ENCODE measurements at regions of chr5 and their contacts with region 1.

Region 1: DNA sequence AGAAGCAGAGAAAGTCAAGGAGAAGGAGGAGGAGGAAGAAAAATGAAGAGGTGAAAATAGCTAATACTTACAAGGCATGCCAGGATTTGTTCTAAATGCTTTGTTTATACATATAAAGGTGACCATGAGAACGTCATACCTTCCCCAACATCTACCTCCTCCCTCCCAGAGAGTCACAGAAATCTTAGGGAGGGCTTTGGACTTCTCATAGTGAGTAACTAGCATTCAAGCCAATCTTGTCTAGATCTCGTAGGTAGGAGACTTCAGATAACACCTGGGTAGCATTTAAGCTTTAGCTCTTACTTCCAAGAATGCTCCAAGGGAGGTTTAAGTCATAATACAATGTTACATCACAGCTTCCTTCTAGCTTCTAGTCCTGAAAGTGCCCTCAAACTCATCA is 36.5 kb upstream of the GPBP1 start:
- DNase-seq: no peak
- ATAC-seq: no peak
- H3K4me3 Mint-ChIP-seq: no peak overlapping the region
- H3K27ac Mint-ChIP-seq: no peak overlapping the region
- H3K4me1 Mint-ChIP-seq: no peaks in the 10 kb centered on the region
- H3K27me3 Mint-ChIP-seq: peaks cover 20% of the 10 kb centered on the region

Region 2: DNA sequence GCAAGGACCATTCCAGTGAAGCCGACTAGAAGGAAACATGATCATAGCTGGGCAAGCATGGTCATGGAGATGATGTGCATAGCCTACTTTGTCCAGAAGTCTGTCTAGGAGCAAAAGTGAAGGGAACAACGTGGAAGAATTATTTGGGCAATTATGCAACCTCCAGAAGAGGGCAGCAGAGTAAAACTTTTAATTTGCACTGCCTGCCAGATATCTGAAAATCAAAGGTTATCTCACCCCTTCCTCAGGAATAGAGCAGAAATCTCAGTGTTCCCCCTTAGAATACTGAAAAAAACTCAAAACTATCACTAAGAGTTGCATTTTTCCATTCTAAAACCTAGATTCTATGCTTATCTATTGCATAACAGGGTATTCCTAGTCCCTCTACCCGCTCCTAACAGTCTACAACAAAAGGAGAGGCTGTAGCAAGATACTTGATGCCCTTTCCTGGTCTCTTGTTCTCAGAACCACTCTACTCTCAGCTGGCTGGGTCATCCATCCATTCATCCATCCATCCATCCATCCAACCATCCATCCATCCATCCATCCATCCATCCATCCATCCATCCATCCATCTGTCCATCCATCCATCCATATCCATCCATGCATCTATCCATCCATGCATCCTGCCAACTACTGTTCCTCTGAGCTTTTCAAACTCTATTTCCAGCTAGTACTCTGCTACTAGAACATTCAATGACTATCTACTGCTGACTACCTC is 236.4 kb before region 1 on chr5:
- CTCF ChIA-PET with region 1: interaction called, 54 read pairs
- POLR2A ChIA-PET with region 1: interaction called, 3 read pairs
- DNase-seq: peak; percentile 51
- ATAC-seq: peak; percentile 58
- H3K4me3 Mint-ChIP-seq: no peak overlapping the region
- H3K27ac Mint-ChIP-seq: no peak overlapping the region
- H3K4me1 Mint-ChIP-seq: no peaks in the 10 kb centered on the region
- H3K27me3 Mint-ChIP-seq: peaks cover 17% of the 10 kb centered on the region

Region 3: DNA sequence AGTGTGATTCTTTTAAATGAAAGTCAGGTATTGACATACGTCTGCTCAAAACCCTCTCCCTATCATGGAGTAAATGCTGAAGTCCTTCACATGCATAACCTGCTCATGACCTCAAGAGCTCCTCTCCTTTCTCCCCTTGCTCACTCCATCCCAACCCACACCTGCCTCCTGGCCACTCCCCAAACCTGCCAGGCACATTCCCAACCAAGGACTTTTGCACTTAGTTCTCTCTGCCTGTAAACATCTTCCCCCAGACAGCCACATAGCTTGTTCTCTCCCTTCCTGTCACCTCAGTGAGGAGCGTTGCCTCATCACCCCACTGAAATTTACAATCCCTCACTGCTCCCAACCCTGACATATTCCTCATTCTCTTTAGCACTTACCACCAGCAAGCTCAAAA is 219.3 kb before region 1 on chr5:
- CTCF ChIA-PET with region 1: interaction called, 14 read pairs
- POLR2A ChIA-PET with region 1: no interaction called
- DNase-seq: no peak
- ATAC-seq: no peak
- H3K4me3 Mint-ChIP-seq: no peak overlapping the region
- H3K27ac Mint-ChIP-seq: peak overlapping the region; percentile 5
- H3K4me1 Mint-ChIP-seq: peaks cover 7% of the 10 kb centered on the region
- H3K27me3 Mint-ChIP-seq: no peaks in the 10 kb centered on the region

Region 4: DNA sequence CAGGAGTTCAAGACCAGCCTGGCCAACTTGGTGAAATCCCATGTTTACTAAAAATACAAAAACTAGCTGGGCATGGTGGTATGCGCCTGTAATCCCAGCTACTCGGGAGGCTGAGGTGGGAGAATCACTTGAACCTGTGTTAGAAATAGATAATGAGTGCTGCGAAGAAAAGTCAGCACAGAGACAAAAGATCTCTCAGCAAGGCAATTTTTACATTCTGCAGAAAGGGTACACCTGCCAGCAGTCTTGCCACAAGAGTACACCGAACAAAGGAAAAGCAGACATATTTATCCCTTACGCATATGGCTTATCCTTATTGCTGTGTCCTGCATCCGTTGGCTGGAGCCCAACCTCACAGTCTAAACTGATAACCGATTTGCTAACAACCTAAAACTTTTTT is 20.3 kb after region 1 on chr5:
- CTCF ChIA-PET with region 1: interaction called, 16 read pairs
- POLR2A ChIA-PET with region 1: no interaction called
- DNase-seq: no peak
- ATAC-seq: no peak
- H3K4me3 Mint-ChIP-seq: no peak overlapping the region
- H3K27ac Mint-ChIP-seq: no peak overlapping the region
- H3K4me1 Mint-ChIP-seq: no peaks in the 10 kb centered on the region
- H3K27me3 Mint-ChIP-seq: no peaks in the 10 kb centered on the region

Region 5: GRCh38 chr5:57221049-57221568 is 83.7 kb after region 1 on chr5:
- CTCF ChIA-PET with region 1: interaction called, 25 read pairs
- POLR2A ChIA-PET with region 1: no interaction called
- DNase-seq: peak; percentile 52
- ATAC-seq: peak; percentile 84
- H3K4me3 Mint-ChIP-seq: no peak overlapping the region
- H3K27ac Mint-ChIP-seq: no peak overlapping the region
- H3K4me1 Mint-ChIP-seq: peaks cover 19% of the 10 kb centered on the region
- H3K27me3 Mint-ChIP-seq: no peaks in the 10 kb centered on the region

Measured in activated CD8-positive, alpha-beta T cell treated with anti-CD3 and anti-CD28 coated beads, Interleukin-2, amount 10 ng/mL, durations not matched to agents 7 days and 5 days (primary cell).